ENCODE measurements at regions of chr9 and their contacts with region 1.

Region 1: GRCh38 chr9:137034863-137035761 is 3.2 kb upstream of the FUT7 start:
- DNase-seq: peak; percentile 84 to 87
- H3K4me3 ChIP-seq: no peak overlapping the region
- H3K4me3 Mint-ChIP-seq: no peak overlapping the region
- H3K27ac Mint-ChIP-seq: no peak overlapping the region
- H3K4me1 ChIP-seq: peaks cover 6% of the 10 kb centered on the region
- H3K4me1 Mint-ChIP-seq: no peaks in the 10 kb centered on the region
- H3K27me3 ChIP-seq: no peaks in the 10 kb centered on the region
- H3K27me3 Mint-ChIP-seq: no peaks in the 10 kb centered on the region
- CTCF ChIP-seq: peak; percentile 91 to 95

Region 2: GRCh38 chr9:136799854-136800657 is 235.1 kb before region 1 on chr9:
- CTCF ChIA-PET with region 1: interaction called, 11 read pairs
- POLR2A ChIA-PET with region 1: no interaction called
- intact Hi-C with region 1: no loop called
- DNase-seq: peak; percentile 90 to 96
- H3K4me3 ChIP-seq: peak overlapping the region; percentile 78
- H3K4me3 Mint-ChIP-seq: peak overlapping the region; percentile 79
- H3K27ac Mint-ChIP-seq: peak overlapping the region; percentile 70
- H3K4me1 ChIP-seq: peaks cover 37% of the 10 kb centered on the region
- H3K4me1 Mint-ChIP-seq: peaks cover 17% of the 10 kb centered on the region
- H3K27me3 ChIP-seq: no peaks in the 10 kb centered on the region
- H3K27me3 Mint-ChIP-seq: no peaks in the 10 kb centered on the region
- CTCF ChIP-seq: no peak

Region 3: DNA sequence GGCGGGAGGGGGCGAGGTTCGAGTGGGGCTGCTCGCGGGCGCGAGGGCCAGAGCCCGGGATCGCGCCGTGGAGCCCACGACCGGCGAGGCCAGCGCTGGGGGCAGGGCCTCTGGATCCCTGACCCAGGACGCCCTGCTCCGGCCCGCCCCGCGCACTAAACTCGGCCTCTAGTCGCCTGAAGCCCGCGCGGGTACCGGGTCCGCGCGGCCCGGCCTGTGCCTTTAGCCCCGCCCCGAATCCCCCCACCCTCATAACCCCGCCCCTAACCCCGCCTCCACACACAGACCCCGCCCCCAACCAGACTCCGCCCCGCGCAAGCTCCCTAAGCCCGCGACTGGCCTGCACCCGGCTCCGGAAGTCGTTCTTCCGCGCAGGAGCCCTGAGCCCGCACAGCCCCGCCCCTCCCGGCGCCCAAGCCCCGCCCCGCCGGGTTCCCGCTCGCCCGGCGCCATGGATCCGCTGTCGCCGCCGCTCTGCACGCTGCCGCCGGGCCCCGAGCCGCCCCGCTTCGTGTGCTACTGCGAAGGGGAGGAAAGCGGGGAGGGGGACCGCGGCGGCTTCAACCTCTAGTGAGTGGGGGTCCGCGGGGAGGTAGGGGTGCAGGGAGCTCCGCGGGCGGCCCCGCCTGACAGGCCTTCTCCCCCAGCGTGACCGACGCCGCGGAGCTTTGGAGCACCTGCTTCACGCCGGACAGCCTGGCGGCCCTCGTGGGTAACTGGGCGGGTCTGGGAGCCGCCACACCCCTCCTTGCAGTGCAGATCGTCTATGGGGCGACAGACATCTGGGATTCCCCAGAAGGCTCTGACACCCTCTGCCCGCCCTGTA is 42.9 kb before region 1 on chr9 and contains the start of gene PAXX:
- CTCF ChIA-PET with region 1: interaction called, 12 read pairs
- POLR2A ChIA-PET with region 1: no interaction called
- intact Hi-C with region 1: no loop called
- DNase-seq: peak; percentile 93 to 96
- H3K4me3 ChIP-seq: peak within 1 kb of the TSS; percentile 87
- H3K4me3 Mint-ChIP-seq: peak within 1 kb of the TSS; percentile 83
- H3K27ac Mint-ChIP-seq: peak within 1 kb of the TSS; percentile 82
- H3K4me1 ChIP-seq: peaks cover 55% of the 10 kb centered on the region
- H3K4me1 Mint-ChIP-seq: peaks cover 30% of the 10 kb centered on the region
- H3K27me3 ChIP-seq: no peaks in the 10 kb centered on the region
- H3K27me3 Mint-ChIP-seq: no peaks in the 10 kb centered on the region
- CTCF ChIP-seq: no peak
- total RNA-seq, gene PAXX: 66.2 TPM in 2 replicates

Region 4: GRCh38 chr9:137064027-137064879 is 29.1 kb after region 1 on chr9:
- CTCF ChIA-PET with region 1: interaction called, 42 read pairs
- POLR2A ChIA-PET with region 1: no interaction called
- intact Hi-C with region 1: no loop called
- DNase-seq: peak in 1 of 2 experiments; percentile 72
- H3K4me3 ChIP-seq: no peak overlapping the region
- H3K4me3 Mint-ChIP-seq: no peak overlapping the region
- H3K27ac Mint-ChIP-seq: no peak overlapping the region
- H3K4me1 ChIP-seq: peaks cover 15% of the 10 kb centered on the region
- H3K4me1 Mint-ChIP-seq: peaks cover 10% of the 10 kb centered on the region
- H3K27me3 ChIP-seq: no peaks in the 10 kb centered on the region
- H3K27me3 Mint-ChIP-seq: no peaks in the 10 kb centered on the region
- CTCF ChIP-seq: peak; percentile 90 to 94

Region 5: GRCh38 chr9:137076636-137077009 is 41.5 kb after region 1 on chr9:
- CTCF ChIA-PET with region 1: no interaction called
- POLR2A ChIA-PET with region 1: no interaction called
- intact Hi-C with region 1: no loop called
- DNase-seq: peak in 1 of 2 experiments; percentile 34
- H3K4me3 ChIP-seq: no peak overlapping the region; the same call in none of the 2 replicates
- H3K4me3 Mint-ChIP-seq: peak overlapping the region; percentile 60
- H3K27ac Mint-ChIP-seq: no peak overlapping the region
- H3K4me1 ChIP-seq: peaks cover 17% of the 10 kb centered on the region
- H3K4me1 Mint-ChIP-seq: no peaks in the 10 kb centered on the region
- H3K27me3 ChIP-seq: no peaks in the 10 kb centered on the region
- H3K27me3 Mint-ChIP-seq: no peaks in the 10 kb centered on the region
- CTCF ChIP-seq: no peak

Region 6: DNA sequence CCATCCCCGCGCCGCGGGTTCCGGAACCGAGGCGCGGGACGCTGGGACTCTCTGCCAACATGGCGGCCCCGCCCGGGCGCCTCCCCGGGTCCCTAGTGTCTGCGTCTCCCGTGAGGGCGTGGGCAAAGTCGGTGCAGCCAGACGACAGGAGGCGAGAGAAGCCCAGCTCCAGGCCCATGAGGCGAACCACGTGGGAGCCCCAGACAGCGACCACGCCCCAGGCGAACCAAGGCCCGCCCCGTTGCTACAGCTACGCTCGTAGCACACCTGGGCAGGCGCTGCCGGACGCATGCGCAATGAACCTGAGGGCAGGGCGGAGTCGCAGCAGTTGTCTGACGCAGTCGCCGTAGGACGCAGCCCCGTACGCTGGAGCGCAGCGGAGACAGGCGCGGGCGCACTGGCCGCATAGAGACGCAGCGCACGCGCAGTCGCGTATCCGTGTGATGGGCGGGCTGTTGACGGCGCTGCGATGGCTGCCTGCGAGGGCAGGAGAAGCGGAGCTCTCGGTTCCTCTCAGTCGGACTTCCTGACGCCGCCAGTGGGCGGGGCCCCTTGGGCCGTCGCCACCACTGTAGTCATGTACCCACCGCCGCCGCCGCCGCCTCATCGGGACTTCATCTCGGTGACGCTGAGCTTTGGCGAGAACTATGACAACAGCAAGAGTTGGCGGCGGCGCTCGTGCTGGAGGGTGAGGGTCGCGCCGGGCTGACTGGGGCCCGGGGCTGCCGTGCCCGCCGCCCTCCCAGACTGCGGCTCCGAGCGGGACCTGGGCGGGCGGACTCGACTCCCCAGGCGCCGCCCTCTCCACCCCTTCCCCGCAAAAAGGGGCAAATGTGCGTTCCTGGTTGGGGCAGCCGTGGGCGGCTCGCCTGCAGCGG is 51.7 kb after region 1 on chr9 and contains the start of gene MAN1B1:
- CTCF ChIA-PET with region 1: interaction called, 14 read pairs
- POLR2A ChIA-PET with region 1: no interaction called
- intact Hi-C with region 1: no loop called
- DNase-seq: peak; percentile 99
- H3K4me3 ChIP-seq: peak within 1 kb of the TSS; percentile 75
- H3K4me3 Mint-ChIP-seq: peak within 1 kb of the TSS; percentile 100
- H3K27ac Mint-ChIP-seq: peak within 1 kb of the TSS; percentile 100
- H3K4me1 ChIP-seq: peaks cover 7% of the 10 kb centered on the region
- H3K4me1 Mint-ChIP-seq: peaks cover 15% of the 10 kb centered on the region
- H3K27me3 ChIP-seq: no peaks in the 10 kb centered on the region
- H3K27me3 Mint-ChIP-seq: no peaks in the 10 kb centered on the region
- CTCF ChIP-seq: no peak
- total RNA-seq, gene MAN1B1: 57.7 and 58.0 TPM in 2 replicates

Region 7: DNA sequence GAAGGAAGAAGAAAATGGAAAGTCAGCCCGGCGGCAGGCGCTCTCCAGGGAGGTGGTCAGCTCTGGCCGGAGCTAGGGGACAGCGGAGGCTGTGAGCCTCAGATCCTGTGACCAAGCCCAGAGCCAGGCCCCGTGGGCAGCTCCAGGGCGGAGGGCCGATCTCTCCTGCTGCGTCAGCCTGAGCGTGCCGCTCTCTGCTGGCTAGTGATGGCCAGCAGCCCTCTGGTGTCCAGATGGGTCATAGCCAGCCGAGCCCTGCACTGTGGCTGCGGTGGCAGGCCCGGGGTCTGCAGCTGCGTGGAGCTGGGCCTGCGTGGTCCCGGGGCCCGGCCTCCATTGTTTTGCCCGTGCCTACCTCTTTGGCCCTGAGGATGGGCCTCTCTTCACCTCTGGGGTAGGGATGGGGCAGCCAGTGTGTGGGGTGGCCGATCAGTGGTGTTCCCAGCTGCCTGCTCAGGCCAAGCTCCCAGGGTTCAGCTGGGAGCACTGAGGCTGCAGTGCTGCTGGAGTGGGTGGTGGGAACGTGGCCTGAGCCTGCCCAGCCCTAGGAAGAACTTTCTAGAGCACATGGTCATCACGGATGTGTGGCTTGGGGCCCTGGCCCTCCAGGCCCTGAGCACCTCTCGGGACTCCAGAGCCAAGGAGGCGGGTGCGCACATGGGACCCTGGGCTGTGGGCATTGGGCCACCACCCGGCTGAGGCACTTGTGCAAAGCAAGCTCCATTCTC is 284.1 kb after region 1 on chr9:
- CTCF ChIA-PET with region 1: no interaction called
- POLR2A ChIA-PET with region 1: no interaction called
- intact Hi-C with region 1: no loop called
- DNase-seq: peak; percentile 53 to 54
- H3K4me3 ChIP-seq: no peak overlapping the region
- H3K4me3 Mint-ChIP-seq: no peak overlapping the region
- H3K27ac Mint-ChIP-seq: no peak overlapping the region
- H3K4me1 ChIP-seq: peaks cover 19% of the 10 kb centered on the region
- H3K4me1 Mint-ChIP-seq: no peaks in the 10 kb centered on the region
- H3K27me3 ChIP-seq: no peaks in the 10 kb centered on the region
- H3K27me3 Mint-ChIP-seq: no peaks in the 10 kb centered on the region
- CTCF ChIP-seq: peak; percentile 30 to 56

Measured in Caco-2 (cell line).